ENCODE measurements at regions of chr17 and their contacts with region 1.

Region 1: DNA sequence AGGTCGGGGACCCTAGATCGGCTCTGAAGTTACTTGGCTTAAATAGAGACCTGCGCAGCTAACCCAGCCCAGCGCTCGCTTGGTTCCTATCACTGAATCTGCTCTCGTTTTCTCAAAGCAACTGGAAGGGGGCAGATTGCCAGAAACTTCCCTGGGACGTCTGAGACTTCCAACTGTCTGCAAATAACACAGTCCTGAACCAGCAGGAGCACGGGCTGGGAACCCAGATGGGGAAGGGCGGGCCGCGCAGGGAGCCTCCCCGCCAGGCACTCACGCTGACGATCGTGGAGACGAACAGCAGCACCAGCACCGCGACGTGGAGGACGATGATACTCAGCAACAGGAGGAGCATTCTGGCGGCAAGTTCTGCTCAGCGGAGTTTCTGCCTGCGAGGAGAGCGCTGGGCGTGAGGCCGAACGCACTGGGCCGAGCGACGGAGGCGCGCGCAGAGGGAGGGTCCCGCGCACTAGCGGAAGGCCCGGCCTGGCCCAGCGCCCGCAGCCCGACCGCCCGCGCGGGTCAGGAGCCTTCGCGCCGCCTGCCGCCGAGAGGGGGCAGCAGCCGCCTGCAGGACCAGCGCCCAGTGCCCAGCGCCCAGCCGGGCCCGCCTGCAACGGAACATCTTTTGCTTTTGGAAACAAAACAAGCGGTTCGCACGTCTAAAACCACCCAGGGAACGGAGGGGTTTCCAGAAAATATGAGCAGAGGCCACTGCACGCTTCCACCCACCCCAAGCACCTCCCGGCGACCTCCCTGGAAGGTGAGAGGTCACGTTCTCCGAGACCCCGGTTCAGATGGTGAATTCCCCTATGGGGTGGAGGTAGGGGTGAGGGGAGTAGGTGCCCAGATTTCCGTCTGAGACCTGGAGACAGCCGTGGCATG is 4.5 kb downstream of the PMP22 start:
- DNase-seq: peak in 1 of 2 donors; percentile 89
- H3K4me3 ChIP-seq: peak overlapping the region; percentile 58 to 84
- H3K27ac ChIP-seq: peak overlapping the region; percentile 90
- H3K4me1 ChIP-seq: peaks cover 47% of the 10 kb centered on the region
- H3K27me3 ChIP-seq: no peaks in the 10 kb centered on the region
- CTCF ChIP-seq: peak; percentile 60 to 90 (median 67)
- POLR2A ChIP-seq: peak in 1 of 2 donors; percentile 11

Region 2: GRCh38 chr17:15213381-15214087 is 47.1 kb before region 1 on chr17:
- intact Hi-C with region 1: no loop called
- DNase-seq: no peak
- H3K4me3 ChIP-seq: no peak overlapping the region
- H3K27ac ChIP-seq: no peak overlapping the region
- H3K4me1 ChIP-seq: no peaks in the 10 kb centered on the region
- H3K27me3 ChIP-seq: no peaks in the 10 kb centered on the region
- CTCF ChIP-seq: no peak
- POLR2A ChIP-seq: no peak

Region 3: GRCh38 chr17:15409721-15410250 is 149.2 kb after region 1 on chr17:
- intact Hi-C with region 1: loop called (anchors 10 kb)
- DNase-seq: no peak
- H3K4me3 ChIP-seq: peak overlapping the region in 1 of 2 donors; percentile 27
- H3K27ac ChIP-seq: peak overlapping the region; percentile 85
- H3K4me1 ChIP-seq: peaks cover 31% of the 10 kb centered on the region
- H3K27me3 ChIP-seq: no peaks in the 10 kb centered on the region
- CTCF ChIP-seq: no peak
- POLR2A ChIP-seq: peak in 1 of 2 donors; percentile 26

Region 4: DNA sequence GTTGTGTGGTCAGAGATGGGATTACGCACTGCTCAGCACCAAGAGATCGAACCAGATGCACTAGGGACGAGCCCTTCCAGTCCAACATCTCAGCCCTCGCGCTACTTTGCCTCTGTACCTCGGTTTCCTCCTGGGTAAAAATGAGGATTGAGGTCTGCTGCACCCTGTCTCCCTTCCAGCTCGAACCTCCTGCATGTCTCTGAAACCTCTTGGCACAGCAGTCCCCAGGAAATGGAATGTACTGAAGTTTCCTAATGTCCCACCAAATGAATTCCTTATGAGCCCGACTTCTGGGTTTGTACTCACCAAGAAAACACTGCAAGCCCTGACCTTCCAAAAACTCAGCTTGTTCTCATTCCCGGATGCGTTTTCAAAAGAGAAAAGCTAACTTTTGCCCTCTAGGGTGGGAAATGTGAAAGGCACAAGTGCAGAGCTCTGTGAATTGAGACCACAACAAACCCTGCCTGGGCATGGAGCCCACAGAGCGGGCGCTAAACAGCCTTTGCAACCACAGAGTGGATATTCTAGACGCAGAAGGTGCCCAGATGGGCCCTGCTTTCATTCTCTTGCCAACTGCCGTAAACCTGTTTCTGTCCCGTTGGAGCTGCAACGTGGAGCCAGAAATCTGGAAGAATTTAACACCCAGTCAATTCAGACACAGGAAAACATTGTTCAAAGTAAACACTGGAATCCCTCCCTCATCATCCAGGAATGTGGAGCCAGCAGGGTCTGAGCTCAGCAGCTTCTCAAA is 196.5 kb after region 1 on chr17:
- intact Hi-C with region 1: loop called (anchors 5 kb)
- DNase-seq: no peak
- H3K4me3 ChIP-seq: peak overlapping the region in 1 of 2 donors; percentile 16
- H3K27ac ChIP-seq: peak overlapping the region; percentile 83
- H3K4me1 ChIP-seq: peaks cover 46% of the 10 kb centered on the region
- H3K27me3 ChIP-seq: no peaks in the 10 kb centered on the region
- CTCF ChIP-seq: no peak
- POLR2A ChIP-seq: no peak

Region 5: DNA sequence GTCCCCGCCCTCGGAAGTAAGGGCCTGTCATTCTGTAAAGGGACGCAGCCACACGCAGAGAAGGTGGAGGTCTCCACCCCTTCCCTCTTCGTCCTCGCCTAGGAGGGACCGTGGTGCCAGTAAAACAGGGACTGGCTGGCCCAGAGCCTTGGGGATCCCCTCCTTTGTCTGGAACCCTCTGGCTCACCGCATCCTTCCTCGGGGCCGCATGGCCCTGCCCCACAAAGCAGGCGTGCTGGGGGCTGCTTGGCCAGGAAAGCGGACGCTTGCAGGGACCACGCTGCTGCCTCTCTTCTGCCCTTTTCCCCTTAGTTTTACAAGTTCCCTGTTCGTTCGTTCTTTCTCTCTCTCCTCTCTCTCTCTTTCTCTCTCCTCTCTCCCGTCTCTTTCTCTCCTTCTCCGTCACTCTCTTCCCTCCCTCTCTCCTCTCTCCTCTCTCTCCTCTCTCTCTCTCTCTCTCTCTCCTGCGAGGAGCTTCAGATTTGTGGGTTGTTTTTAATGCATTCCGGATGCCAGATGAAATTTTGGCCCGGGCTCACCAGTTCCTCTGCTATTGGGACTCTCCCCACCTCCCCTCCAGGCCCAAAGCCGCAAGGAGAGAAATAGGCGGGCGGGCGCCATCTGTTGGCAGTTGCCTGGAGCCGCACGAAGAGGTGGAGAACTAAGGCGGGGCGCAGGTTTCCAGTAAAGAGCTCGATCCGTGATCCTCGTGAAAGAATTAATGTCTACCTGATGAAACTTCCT is 241.9 kb after region 1 on chr17:
- intact Hi-C with region 1: loop called (anchors 1 kb)
- DNase-seq: peak in 1 of 2 donors; percentile 94
- H3K4me3 ChIP-seq: peak overlapping the region; percentile 30 to 34
- H3K27ac ChIP-seq: peak overlapping the region; percentile 88
- H3K4me1 ChIP-seq: peaks cover 16% of the 10 kb centered on the region
- H3K27me3 ChIP-seq: no peaks in the 10 kb centered on the region
- CTCF ChIP-seq: peak; percentile 60 to 89 (median 76)
- POLR2A ChIP-seq: no peak

Measured in vagina (tissue), 2 donors.